ENCODE measurements at regions of chr1 and their contacts with region 1.

Region 1: GRCh38 chr1:5682626-5683225 is 309.5 kb downstream of the NPHP4 start:
- DNase-seq: no peak
- H3K4me3 ChIP-seq: no peak overlapping the region
- H3K27ac ChIP-seq: no peak overlapping the region
- H3K4me1 ChIP-seq: no peaks in the 10 kb centered on the region
- H3K27me3 ChIP-seq: peaks cover 0 to 21% of the 10 kb centered on the region in 2 donors
- CTCF ChIP-seq: no peak
- POLR2A ChIP-seq: no peak

Region 2: GRCh38 chr1:5717031-5717683 is 34.4 kb after region 1 on chr1:
- intact Hi-C with region 1: loop called (anchors 2 kb)
- DNase-seq: no peak
- H3K4me3 ChIP-seq: no peak overlapping the region
- H3K27ac ChIP-seq: no peak overlapping the region
- H3K4me1 ChIP-seq: no peaks in the 10 kb centered on the region
- H3K27me3 ChIP-seq: peaks cover 0 to 29% of the 10 kb centered on the region in 2 donors
- CTCF ChIP-seq: no peak
- POLR2A ChIP-seq: no peak

Measured in breast epithelium (tissue), 4 donors.